B cell (primary cell): ENCODE measurements at regions of chr4 and their contacts with region 1.

Region 1: DNA sequence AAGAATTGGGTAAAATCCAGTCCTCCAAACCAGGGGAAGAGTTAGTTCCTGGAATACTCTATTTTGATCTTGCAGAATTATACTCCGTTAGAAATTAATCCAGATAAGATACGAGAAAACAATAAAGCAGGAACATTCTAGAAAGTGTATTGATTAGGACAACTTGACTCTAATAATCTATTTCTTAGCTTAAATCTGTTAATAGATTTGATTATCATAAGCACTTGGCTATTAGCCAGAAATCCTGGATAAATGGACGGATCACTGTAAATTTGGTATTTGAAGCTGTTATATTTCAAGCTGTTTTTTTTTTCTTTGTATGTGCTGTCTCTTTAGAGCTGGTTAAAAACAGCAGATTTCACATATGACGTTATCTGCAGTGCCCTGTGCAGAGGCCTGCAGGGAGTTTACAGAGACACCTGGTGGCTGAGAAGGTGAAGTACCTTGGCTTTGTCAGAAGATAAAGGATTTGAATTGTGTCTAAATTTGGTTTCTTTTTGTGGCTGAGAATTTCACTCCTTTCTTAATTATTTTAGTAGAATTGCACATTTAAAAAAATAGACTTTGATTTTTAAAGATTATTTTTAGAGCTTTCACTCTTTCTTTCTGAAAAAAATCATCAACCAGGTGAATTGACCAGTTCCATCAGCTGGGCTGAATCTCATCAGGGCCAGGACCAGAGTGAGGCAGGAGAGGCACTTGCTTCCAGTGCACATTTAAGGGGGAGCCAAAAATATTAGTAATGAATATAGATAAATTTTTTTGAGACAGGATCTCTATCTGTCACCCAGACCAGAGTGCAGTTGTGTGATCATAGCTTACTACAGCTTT is 9.7 kb upstream of the CHRNA9 start:
- DNase-seq: peak; percentile 81
- ATAC-seq: peak; percentile 100
- H3K4me3 ChIP-seq: no peak overlapping the region
- H3K4me3 Mint-ChIP-seq: no peak overlapping the region
- H3K27ac ChIP-seq: no peak overlapping the region
- H3K27ac Mint-ChIP-seq: peak overlapping the region; percentile 46
- H3K4me1 ChIP-seq: peaks cover 8 to 14% of the 10 kb centered on the region in 2 donors
- H3K4me1 Mint-ChIP-seq: peaks cover 18% of the 10 kb centered on the region
- H3K27me3 ChIP-seq: peaks cover 0 to 4% (median 0%) of the 10 kb centered on the region in 4 experiments
- H3K27me3 Mint-ChIP-seq: peaks cover 8% of the 10 kb centered on the region
- CTCF ChIP-seq: peak; percentile 96

Region 2: GRCh38 chr4:40130401-40131036 is 194.9 kb before region 1 on chr4:
- CTCF ChIA-PET with region 1: interaction called, 11 read pairs
- POLR2A ChIA-PET with region 1: no interaction called
- intact Hi-C with region 1: no loop called
- DNase-seq: no peak
- ATAC-seq: no peak
- H3K4me3 ChIP-seq: no peak overlapping the region
- H3K4me3 Mint-ChIP-seq: no peak overlapping the region
- H3K27ac ChIP-seq: no peak overlapping the region
- H3K27ac Mint-ChIP-seq: no peak overlapping the region
- H3K4me1 ChIP-seq: no peaks in the 10 kb centered on the region
- H3K4me1 Mint-ChIP-seq: peaks cover 2% of the 10 kb centered on the region
- H3K27me3 ChIP-seq: no peaks in the 10 kb centered on the region
- H3K27me3 Mint-ChIP-seq: no peaks in the 10 kb centered on the region
- CTCF ChIP-seq: no peak

Region 3: GRCh38 chr4:40185830-40186664 is 139.4 kb before region 1 on chr4:
- CTCF ChIA-PET with region 1: interaction called, 14 read pairs
- POLR2A ChIA-PET with region 1: interaction called, 5 read pairs
- intact Hi-C with region 1: no loop called
- DNase-seq: peak; percentile 87
- ATAC-seq: peak; percentile 79
- H3K4me3 ChIP-seq: peak overlapping the region; percentile 11 to 61 (median 37)
- H3K4me3 Mint-ChIP-seq: peak overlapping the region; percentile 85
- H3K27ac ChIP-seq: peak overlapping the region; percentile 92 to 94
- H3K27ac Mint-ChIP-seq: peak overlapping the region; percentile 97
- H3K4me1 ChIP-seq: peaks cover 60 to 88% of the 10 kb centered on the region in 2 donors
- H3K4me1 Mint-ChIP-seq: peaks cover 76% of the 10 kb centered on the region
- H3K27me3 ChIP-seq: no peaks in the 10 kb centered on the region
- H3K27me3 Mint-ChIP-seq: no peaks in the 10 kb centered on the region
- CTCF ChIP-seq: no peak

Region 4: DNA sequence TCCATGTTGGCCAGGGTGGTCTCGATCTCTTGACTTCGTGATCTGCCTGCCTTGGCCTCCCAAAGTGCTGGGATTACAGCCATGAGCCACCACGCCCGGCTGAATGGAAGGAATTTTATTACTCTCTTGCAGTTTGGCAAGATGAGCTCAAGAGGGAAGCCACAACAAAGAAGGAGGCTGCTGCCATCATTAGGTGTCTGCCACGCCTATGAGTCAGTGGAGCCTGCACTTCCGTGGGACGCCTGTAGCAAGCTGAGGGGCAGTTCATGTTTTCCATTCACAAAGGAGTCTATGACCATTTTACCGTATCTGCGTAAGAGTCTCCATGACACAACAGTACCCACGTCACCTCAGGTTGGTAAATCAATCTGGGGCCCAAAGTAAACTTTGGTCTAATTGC is 41.4 kb before region 1 on chr4:
- CTCF ChIA-PET with region 1: interaction called, 11 read pairs
- POLR2A ChIA-PET with region 1: no interaction called
- intact Hi-C with region 1: no loop called
- DNase-seq: peak; percentile 60
- ATAC-seq: peak; percentile 71
- H3K4me3 ChIP-seq: no peak overlapping the region
- H3K4me3 Mint-ChIP-seq: no peak overlapping the region
- H3K27ac ChIP-seq: no peak overlapping the region
- H3K27ac Mint-ChIP-seq: peak overlapping the region; percentile 63
- H3K4me1 ChIP-seq: peaks cover 24 to 49% of the 10 kb centered on the region in 2 donors
- H3K4me1 Mint-ChIP-seq: peaks cover 56% of the 10 kb centered on the region
- H3K27me3 ChIP-seq: no peaks in the 10 kb centered on the region
- H3K27me3 Mint-ChIP-seq: no peaks in the 10 kb centered on the region
- CTCF ChIP-seq: no peak

Region 5: GRCh38 chr4:40409835-40410234 is 84.4 kb after region 1 on chr4:
- CTCF ChIA-PET with region 1: no interaction called
- POLR2A ChIA-PET with region 1: no interaction called
- intact Hi-C with region 1: no loop called
- DNase-seq: no peak
- ATAC-seq: no peak
- H3K4me3 ChIP-seq: no peak overlapping the region
- H3K4me3 Mint-ChIP-seq: no peak overlapping the region
- H3K27ac ChIP-seq: no peak overlapping the region
- H3K27ac Mint-ChIP-seq: no peak overlapping the region
- H3K4me1 ChIP-seq: no peaks in the 10 kb centered on the region
- H3K4me1 Mint-ChIP-seq: no peaks in the 10 kb centered on the region
- H3K27me3 ChIP-seq: no peaks in the 10 kb centered on the region
- H3K27me3 Mint-ChIP-seq: peaks cover 9% of the 10 kb centered on the region
- CTCF ChIP-seq: no peak